ENCODE measurements at regions of chr3 and their contacts with region 1.

Region 1: GRCh38 chr3:192917404-192918274 is at the start of gene MB21D2:
- DNase-seq: peak; percentile 41 to 71 (median 53)
- H3K4me3 ChIP-seq: peak within 1 kb of the TSS; percentile 56 to 87 (median 61)
- H3K4me3 Mint-ChIP-seq: peak within 1 kb of the TSS; percentile 84 to 97
- H3K27ac ChIP-seq: peak within 1 kb of the TSS in 1 of 2 donors; percentile 72
- H3K27ac Mint-ChIP-seq: peak within 1 kb of the TSS; percentile 30 to 90 (median 86)
- H3K4me1 ChIP-seq: peaks cover 34 to 38% of the 10 kb centered on the region in 2 donors
- H3K4me1 Mint-ChIP-seq: peaks cover 40% of the 10 kb centered on the region
- H3K27me3 ChIP-seq: peaks cover 64 to 77% of the 10 kb centered on the region in 2 donors
- H3K27me3 Mint-ChIP-seq: peaks cover 70 to 82% (median 75%) of the 10 kb centered on the region in 3 donors
- CTCF ChIP-seq: no peak
- polyA plus RNA-seq, gene MB21D2: 0.37 to 0.77 (median 0.59) TPM

Region 2: DNA sequence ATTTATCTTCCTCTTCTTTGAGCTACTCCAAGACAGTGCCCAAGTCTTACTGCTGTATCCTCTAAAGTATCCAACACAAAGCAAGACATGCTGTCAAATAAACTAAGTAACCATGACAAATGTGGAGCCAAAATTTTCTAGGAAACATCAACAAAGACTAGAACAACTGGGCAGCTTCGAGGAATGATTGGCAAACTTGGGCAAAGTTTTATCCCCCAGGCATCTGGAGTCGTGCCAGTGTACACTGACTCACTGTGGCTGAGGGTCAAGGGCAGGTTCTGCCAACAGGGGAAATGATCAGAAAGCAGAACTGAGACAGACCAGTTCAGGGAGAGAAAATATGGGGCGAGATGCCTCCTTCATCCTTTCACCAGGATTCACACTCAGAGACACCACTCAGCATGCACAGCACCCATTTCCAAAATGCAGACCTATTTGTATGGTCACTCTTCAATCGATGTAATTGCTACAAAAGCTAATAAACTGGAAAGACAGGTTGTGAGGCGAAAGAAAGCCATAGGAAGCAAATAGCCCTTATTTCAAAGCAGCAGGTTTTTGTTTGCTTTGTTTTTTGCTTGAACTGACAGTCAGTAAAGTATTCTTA is 65.7 kb before region 1 on chr3:
- intact Hi-C with region 1: loop called in 1 of 2 experiments (anchors 10 kb)
- DNase-seq: peak; percentile 67 to 87 (median 81)
- H3K4me3 ChIP-seq: no peak overlapping the region
- H3K4me3 Mint-ChIP-seq: no peak overlapping the region
- H3K27ac ChIP-seq: no peak overlapping the region
- H3K27ac Mint-ChIP-seq: peak overlapping the region in 6 of 7 donors; percentile 23 to 76 (median 62)
- H3K4me1 ChIP-seq: peaks cover 10 to 12% of the 10 kb centered on the region in 2 donors
- H3K4me1 Mint-ChIP-seq: peaks cover 7% of the 10 kb centered on the region
- H3K27me3 ChIP-seq: no peaks in the 10 kb centered on the region
- H3K27me3 Mint-ChIP-seq: peaks cover 0 to 2% (median 0%) of the 10 kb centered on the region in 3 donors
- CTCF ChIP-seq: no peak

Measured in CD14-positive monocyte (primary cell).